ENCODE measurements at regions of chr13 and their contacts with region 1.

Region 1: GRCh38 chr13:98842864-98843481 is 90.5 kb upstream of the SLC15A1 start:
- DNase-seq: peak; percentile 69
- ATAC-seq: peak; percentile 77
- H3K4me3 Mint-ChIP-seq: no peak overlapping the region
- H3K27ac Mint-ChIP-seq: no peak overlapping the region
- H3K4me1 Mint-ChIP-seq: no peaks in the 10 kb centered on the region
- H3K27me3 Mint-ChIP-seq: no peaks in the 10 kb centered on the region

Region 2: DNA sequence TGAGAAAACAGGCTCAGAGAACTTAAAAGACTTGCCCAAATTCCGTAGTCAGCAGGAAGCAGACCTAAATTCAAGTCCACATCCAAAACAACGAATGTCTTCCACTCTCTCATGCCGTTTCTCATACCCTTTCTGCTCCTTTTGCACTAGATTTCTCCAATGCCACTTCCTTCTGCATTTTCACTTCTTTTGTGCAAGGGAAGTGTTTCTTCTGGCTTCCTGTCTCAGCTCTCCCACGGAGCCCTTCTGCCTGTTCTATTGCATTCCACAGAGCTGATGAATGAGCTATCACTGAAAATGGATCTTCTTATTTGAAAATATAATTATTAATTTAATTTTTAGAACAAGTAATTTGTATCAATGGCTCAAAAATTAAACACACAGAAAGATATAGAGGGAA is 210.0 kb before region 1 on chr13:
- CTCF ChIA-PET with region 1: no interaction called
- POLR2A ChIA-PET with region 1: no interaction called
- DNase-seq: no peak
- ATAC-seq: no peak
- H3K4me3 Mint-ChIP-seq: no peak overlapping the region
- H3K27ac Mint-ChIP-seq: no peak overlapping the region
- H3K4me1 Mint-ChIP-seq: no peaks in the 10 kb centered on the region
- H3K27me3 Mint-ChIP-seq: peaks cover 7% of the 10 kb centered on the region

Region 3: DNA sequence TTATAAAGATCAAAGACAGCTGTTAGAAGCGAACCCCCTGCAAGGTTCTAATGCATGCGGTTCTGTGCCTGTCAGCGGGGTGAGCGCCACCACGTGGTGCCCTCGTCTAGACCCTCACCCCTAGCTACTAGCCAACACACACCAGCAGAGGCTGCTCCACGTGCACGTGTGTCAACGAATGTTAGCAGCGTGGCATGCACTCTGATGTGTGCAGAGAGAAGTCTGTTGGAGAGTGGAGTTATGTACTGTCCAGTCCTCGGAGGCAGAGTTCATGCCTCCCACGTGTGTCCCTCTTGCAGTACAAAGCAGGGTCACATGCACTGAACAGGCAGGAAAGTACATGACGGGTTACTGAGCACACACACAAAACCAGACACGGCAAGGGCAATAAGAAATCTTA is 15.5 kb before region 1 on chr13:
- CTCF ChIA-PET with region 1: interaction called, 26 read pairs
- POLR2A ChIA-PET with region 1: interaction called, 3 read pairs
- DNase-seq: no peak
- ATAC-seq: no peak
- H3K4me3 Mint-ChIP-seq: no peak overlapping the region
- H3K27ac Mint-ChIP-seq: no peak overlapping the region
- H3K4me1 Mint-ChIP-seq: peaks cover 26% of the 10 kb centered on the region
- H3K27me3 Mint-ChIP-seq: no peaks in the 10 kb centered on the region

Region 4: GRCh38 chr13:98853771-98854221 is 10.8 kb after region 1 on chr13:
- CTCF ChIA-PET with region 1: interaction called, 34 read pairs
- POLR2A ChIA-PET with region 1: no interaction called
- DNase-seq: peak; percentile 56
- ATAC-seq: peak; percentile 85
- H3K4me3 Mint-ChIP-seq: no peak overlapping the region
- H3K27ac Mint-ChIP-seq: peak overlapping the region; percentile 54
- H3K4me1 Mint-ChIP-seq: peaks cover 16% of the 10 kb centered on the region
- H3K27me3 Mint-ChIP-seq: no peaks in the 10 kb centered on the region

Region 5: DNA sequence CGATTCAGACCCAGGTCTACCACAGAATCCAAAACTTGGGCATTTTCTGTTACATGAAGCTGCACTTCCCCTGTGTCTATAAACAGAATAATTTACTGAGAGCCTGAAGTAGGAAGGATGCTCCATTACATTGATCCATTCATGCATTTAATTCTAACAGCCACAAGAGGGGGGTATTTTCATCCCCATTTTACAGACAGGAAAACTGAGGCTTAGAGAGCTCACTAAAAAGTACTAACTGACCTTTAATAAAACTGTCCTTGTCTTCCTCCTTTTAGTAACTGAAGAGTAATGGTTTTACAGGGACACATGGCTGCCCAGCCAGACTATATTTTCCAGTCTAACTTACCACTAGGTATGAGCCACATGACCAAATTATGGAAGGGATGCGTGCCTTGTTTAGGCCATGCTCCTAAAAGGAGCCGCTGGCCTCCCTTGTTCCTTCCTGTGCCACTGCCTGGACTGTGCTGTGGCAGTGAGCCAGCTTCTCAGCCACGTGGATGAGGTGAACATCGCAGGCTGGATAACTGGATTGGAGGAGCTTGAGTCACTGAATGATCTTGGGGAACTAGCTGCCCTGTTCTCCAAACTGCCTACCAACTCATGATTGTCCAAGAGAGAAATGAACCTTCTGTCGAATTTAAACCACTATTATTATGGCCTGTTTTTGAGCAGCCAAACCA is 26.6 kb after region 1 on chr13:
- CTCF ChIA-PET with region 1: interaction called, 11 read pairs
- POLR2A ChIA-PET with region 1: no interaction called
- DNase-seq: no peak
- ATAC-seq: no peak
- H3K4me3 Mint-ChIP-seq: no peak overlapping the region
- H3K27ac Mint-ChIP-seq: no peak overlapping the region
- H3K4me1 Mint-ChIP-seq: peaks cover 8% of the 10 kb centered on the region
- H3K27me3 Mint-ChIP-seq: no peaks in the 10 kb centered on the region

Measured in activated CD8-positive, alpha-beta T cell treated with anti-CD3 and anti-CD28 coated beads, Interleukin-2, amount 10 ng/mL, durations not matched to agents 7 days and 5 days (primary cell).